Heart left ventricle (tissue), 16 donors: ENCODE measurements at regions of chr1 and their contacts with region 1.

Region 1: DNA sequence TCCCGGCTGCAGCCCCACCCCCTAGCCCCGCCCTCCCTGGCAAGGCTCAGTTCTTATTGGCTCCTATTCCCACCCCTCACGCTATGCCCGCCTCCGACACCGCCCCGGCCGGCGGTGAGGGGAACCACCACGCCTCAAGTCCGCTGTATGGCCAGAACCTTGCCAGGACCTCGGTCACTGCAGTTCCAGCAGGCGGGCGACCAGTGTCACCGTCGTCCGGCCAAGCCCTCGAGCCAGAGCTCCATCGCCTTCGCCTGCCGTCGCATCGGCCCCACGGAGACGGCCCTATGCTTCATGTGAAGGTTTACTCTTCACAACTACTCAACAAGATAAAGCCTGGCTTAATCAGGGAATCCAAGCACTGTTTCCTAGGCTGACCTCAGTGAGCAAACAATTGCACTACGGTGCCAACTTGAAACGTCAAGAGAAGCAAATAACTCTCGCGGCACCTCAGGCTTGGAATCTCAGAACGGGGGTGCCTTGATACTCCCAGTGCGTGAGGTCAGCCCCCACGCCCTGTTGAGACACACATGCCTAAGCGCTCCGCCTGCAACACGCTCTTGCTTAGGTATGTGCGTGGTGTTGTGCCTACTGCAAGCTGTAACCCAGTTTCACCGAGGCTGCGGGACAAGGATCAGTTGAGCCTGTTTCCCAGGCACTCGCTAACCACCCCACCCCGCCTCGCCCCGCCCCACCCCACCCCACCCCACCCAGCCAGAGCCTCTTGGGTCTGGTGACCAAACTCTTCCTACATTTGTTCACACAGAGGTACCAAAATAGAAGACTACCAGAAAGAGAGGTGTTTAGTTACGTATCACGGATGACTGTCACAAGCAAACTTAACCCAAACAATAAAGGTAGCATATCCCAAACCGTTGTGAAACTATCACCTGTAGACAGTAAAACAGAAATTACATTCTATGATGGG is 498 bp upstream of the DENND2C start:
- DNase-seq: peak; percentile 95 to 96 (median 95)
- ATAC-seq: peak; percentile 99 to 100 (median 100)
- H3K4me3 ChIP-seq: peak overlapping the region; percentile 45 to 96 (median 76)
- H3K27ac ChIP-seq: peak overlapping the region in 11 of 12 donors; percentile 70 to 91 (median 83)
- H3K4me1 ChIP-seq: peaks cover 0 to 17% (median 4%) of the 10 kb centered on the region in 12 donors
- H3K27me3 ChIP-seq: peaks cover 0 to 4% (median 0%) of the 10 kb centered on the region in 9 donors
- CTCF ChIP-seq: peak in 8 of 12 donors; percentile 8 to 35 (median 23)
- POLR2A ChIP-seq: peak; percentile 49 to 87

Region 2: DNA sequence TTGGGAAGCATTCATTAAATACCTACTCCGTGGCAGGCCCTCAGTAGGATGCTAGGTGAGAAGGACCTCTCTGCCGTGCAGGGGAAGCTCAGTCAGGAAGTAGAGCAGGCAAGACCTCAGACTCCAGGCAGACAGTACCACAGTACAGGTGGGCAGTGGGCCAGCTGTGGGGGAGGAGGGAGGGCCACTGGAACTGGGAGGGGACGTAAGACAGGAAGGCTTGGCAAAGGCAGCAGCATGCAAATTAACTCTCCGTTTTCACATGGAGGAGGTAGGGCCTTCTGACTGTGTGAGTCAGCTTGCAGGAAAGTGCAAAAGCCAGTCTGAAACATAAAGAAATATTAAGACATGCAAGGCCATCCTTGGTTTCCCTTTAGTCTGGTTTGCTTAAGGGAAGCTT is 317.1 kb before region 1 on chr1:
- intact Hi-C with region 1: loop called in 5 of 10 experiments (anchors 5 to 10 kb)
- DNase-seq: peak; percentile 59 to 80 (median 67)
- ATAC-seq: peak; percentile 74 to 92 (median 84)
- H3K4me3 ChIP-seq: no peak overlapping the region
- H3K27ac ChIP-seq: peak overlapping the region in 1 of 12 donors; percentile 41
- H3K4me1 ChIP-seq: peaks cover 0 to 14% (median 6%) of the 10 kb centered on the region in 12 donors
- H3K27me3 ChIP-seq: no peaks in the 10 kb centered on the region
- CTCF ChIP-seq: no peak
- POLR2A ChIP-seq: no peak

Region 3: GRCh38 chr1:114575532-114575931 is 94.8 kb before region 1 on chr1:
- intact Hi-C with region 1: loop called in 4 of 10 experiments (anchors 5 to 10 kb)
- DNase-seq: no peak
- ATAC-seq: no peak
- H3K4me3 ChIP-seq: no peak overlapping the region
- H3K27ac ChIP-seq: no peak overlapping the region
- H3K4me1 ChIP-seq: peaks cover 0 to 25% (median 13%) of the 10 kb centered on the region in 12 donors
- H3K27me3 ChIP-seq: no peaks in the 10 kb centered on the region
- CTCF ChIP-seq: no peak
- POLR2A ChIP-seq: no peak

Region 4: GRCh38 chr1:114581335-114582287 is 88.7 kb before region 1 on chr1 and contains the start of gene BCAS2:
- intact Hi-C with region 1: loop called in 6 of 10 experiments (anchors 2 to 10 kb)
- DNase-seq: peak; percentile 95 to 98 (median 97)
- ATAC-seq: peak; percentile 98 to 99 (median 99)
- H3K4me3 ChIP-seq: peak within 1 kb of the TSS; percentile 41 to 89 (median 68)
- H3K27ac ChIP-seq: peak within 1 kb of the TSS; percentile 68 to 95 (median 88)
- H3K4me1 ChIP-seq: peaks cover 0 to 37% (median 22%) of the 10 kb centered on the region in 12 donors
- H3K27me3 ChIP-seq: no peaks in the 10 kb centered on the region
- CTCF ChIP-seq: no peak
- POLR2A ChIP-seq: peak in 1 of 2 donors; percentile 88
- total RNA-seq, gene BCAS2: 28.7 to 41.6 (median 34.4) TPM

Region 5: DNA sequence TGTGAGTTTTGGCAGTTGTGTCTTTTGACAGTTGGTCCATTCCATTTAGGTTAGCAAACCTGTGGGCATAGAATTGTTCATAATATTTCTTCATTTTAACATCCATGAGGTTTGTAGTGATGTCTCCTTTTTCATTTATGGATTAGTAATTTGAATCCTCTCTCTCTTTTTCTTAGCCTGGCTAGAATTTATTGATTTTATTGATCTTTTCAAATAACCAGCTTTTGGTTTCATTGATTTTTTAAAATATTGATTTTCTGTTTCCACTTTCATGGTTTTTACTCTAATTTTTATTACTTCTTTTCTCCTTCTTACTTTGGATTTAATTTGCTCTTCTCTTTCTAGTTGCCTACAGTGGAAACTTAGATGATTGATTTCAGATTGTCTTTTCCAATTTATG is 198.4 kb after region 1 on chr1:
- intact Hi-C with region 1: no loop called
- DNase-seq: no peak
- ATAC-seq: no peak
- H3K4me3 ChIP-seq: no peak overlapping the region
- H3K27ac ChIP-seq: no peak overlapping the region
- H3K4me1 ChIP-seq: no peaks in the 10 kb centered on the region
- H3K27me3 ChIP-seq: no peaks in the 10 kb centered on the region
- CTCF ChIP-seq: no peak
- POLR2A ChIP-seq: no peak